Heart left ventricle (tissue), 16 donors: ENCODE measurements at regions of chr1 and their contacts with region 1.

Region 1: DNA sequence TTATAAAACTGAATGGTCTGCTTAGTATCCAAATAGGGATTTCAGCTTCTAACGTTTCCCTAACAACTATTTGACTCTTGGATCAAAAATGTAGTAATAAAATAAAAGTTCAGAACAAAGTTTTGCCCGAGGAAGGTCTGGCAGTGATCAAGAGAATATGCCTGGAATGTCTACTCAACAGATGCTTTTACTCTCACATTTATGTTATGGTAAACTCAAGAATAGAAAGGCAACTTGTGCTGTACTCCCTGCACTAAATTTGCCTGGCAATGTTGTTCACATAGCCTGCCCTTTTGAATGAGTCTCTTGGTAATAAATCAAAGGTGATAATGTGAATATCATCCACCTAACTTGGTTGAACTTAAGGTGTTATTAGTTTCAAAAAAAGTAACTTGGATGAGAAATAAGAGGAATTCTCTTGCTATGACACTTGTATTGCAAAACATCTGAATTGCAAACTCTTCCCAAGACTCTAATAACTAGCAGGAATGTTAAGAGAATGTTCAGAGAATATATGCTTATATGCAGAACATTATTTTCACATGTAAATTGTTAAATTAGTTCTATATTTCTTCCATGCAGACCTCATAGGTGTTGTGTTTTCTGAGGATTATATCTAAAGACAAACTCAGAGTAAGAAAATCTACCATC is 215.8 kb downstream of the COL24A1 start:
- DNase-seq: no peak
- ATAC-seq: no peak
- H3K4me3 ChIP-seq: no peak overlapping the region
- H3K27ac ChIP-seq: no peak overlapping the region
- H3K4me1 ChIP-seq: no peaks in the 10 kb centered on the region
- H3K27me3 ChIP-seq: no peaks in the 10 kb centered on the region
- CTCF ChIP-seq: no peak
- POLR2A ChIP-seq: no peak

Region 2: DNA sequence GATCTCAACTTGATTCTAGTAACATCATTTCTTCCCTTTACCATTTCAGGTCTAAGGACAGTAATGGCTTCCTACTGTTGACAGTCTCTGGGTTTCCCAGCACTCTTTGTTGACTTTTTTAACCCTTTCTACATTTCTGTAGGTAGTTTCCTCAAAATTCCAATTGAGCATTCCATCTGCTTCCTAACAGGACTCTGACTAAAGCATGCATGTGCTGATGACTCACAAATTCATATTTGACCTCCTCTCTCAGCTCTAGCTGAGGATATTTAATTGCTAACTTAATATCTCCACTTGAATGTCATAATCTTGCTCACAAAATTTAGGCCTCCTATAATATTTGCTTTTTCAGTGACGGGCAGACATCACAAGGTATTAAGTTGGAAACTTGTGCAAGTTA is 139.3 kb before region 1 on chr1:
- intact Hi-C with region 1: no loop called
- DNase-seq: no peak
- ATAC-seq: no peak
- H3K4me3 ChIP-seq: no peak overlapping the region
- H3K27ac ChIP-seq: no peak overlapping the region
- H3K4me1 ChIP-seq: peaks cover 0 to 2% (median 0%) of the 10 kb centered on the region in 12 donors
- H3K27me3 ChIP-seq: no peaks in the 10 kb centered on the region
- CTCF ChIP-seq: no peak
- POLR2A ChIP-seq: no peak

Region 3: DNA sequence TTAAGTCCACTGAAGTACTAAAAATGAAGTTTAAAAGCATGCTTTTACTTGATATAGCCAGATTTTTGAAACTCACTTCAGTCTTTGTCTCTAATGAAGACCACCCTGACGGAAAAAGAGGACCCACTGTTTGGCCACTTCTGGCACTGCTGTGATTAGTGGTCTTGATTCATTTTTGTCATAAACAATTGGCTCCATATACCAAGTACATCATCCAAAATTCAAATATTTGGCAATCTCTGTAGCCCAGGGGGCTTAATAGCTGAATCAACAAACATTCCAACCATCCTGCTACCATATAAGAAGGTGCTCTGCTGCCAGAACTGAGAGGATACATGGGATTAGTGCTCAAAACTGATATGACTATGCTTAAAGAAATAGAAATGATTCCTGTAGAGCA is 59.8 kb after region 1 on chr1:
- intact Hi-C with region 1: loop called in 1 of 10 experiments (anchors 10 kb)
- DNase-seq: no peak
- ATAC-seq: no peak
- H3K4me3 ChIP-seq: no peak overlapping the region
- H3K27ac ChIP-seq: no peak overlapping the region
- H3K4me1 ChIP-seq: no peaks in the 10 kb centered on the region
- H3K27me3 ChIP-seq: no peaks in the 10 kb centered on the region
- CTCF ChIP-seq: no peak
- POLR2A ChIP-seq: no peak

Region 4: GRCh38 chr1:86035101-86035500 is 94.3 kb after region 1 on chr1:
- intact Hi-C with region 1: no loop called
- DNase-seq: no peak
- ATAC-seq: no peak
- H3K4me3 ChIP-seq: no peak overlapping the region
- H3K27ac ChIP-seq: no peak overlapping the region
- H3K4me1 ChIP-seq: no peaks in the 10 kb centered on the region
- H3K27me3 ChIP-seq: no peaks in the 10 kb centered on the region
- CTCF ChIP-seq: no peak
- POLR2A ChIP-seq: no peak